ENCODE measurements at regions of chr1 and their contacts with region 1.

Region 1: DNA sequence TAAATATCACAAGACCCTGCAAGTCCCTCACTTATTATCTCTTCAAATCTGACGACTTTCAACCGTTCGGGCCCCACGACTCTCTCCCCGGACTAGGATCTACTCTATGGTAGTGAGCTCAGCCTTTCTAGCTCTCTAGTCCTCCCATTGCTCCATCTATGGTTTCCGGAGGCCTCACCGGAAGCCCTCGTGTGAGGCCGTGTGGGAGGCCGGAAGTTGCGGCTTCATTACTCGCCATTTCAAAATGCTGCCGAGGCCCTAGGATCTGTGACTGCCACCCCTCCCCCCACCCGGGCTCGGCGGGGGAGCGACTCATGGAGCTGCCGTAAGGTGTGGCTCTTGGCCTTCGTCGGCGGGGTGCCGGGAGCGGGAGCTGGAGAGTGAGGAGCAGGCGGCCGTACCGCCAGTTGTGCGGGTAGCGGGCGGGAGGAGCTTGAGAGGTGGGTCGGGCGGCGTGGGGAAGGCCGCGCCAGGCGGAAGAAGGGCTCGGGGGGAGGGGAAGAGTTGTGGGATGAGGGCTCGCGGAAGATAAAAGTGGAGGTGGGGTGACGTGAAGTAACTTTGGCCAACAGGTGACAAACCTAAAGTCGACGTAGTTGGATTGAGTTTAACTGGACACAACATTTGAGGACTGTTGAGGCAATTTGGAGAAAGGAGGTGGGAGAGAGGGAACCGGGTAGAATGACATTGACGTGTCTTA is at the start of gene MDM4:
- DNase-seq: peak; percentile 91
- ATAC-seq: peak; percentile 80
- H3K4me3 Mint-ChIP-seq: no peak within 1 kb of the TSS
- H3K27ac Mint-ChIP-seq: no peak within 1 kb of the TSS
- H3K4me1 Mint-ChIP-seq: peaks cover 80% of the 10 kb centered on the region
- H3K27me3 Mint-ChIP-seq: no peaks in the 10 kb centered on the region
- CTCF ChIP-seq: no peak
- total RNA-seq, gene MDM4: 221 and 264 TPM in 2 replicates

Region 2: DNA sequence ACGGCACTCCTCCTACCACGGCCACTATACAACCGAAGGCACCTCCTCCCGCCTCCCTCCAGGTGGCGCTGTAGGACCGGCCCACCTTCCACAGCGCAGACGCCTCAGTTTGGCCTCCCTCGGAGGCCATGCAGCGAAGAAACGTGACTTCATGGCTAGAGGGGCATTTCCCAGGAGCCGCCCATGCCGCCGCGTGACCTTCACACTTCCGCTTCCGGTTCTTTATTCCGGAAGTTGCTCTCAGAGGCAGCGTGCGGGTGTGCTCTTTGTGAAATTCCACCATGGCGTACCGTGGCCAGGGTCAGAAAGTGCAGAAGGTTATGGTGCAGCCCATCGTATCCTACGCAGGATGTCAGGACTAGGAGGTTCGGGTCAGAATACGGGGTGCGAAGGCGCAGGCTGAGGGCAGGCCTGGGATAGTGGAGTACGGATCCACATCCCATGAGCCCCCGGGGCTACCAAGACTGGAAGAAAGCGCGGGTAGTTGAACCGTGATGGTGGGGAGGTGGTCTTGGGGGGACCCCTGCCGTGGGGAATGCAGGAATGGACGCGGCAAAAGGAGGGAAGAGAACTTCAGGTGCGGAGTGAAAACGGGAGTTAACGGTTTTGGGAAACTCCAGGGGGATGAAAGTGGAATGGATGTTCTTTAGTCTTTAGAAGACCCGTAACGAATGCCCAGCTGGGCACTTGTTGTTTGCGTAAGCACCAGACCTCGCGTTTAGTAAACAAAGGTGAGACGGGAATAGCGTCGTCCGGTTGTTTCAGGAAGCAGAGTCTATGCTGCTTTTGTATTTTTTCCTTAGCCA is 654.7 kb before region 1 on chr1 and contains the start of gene SNRPE:
- CTCF ChIA-PET with region 1: no interaction called
- POLR2A ChIA-PET with region 1: no interaction called
- intact Hi-C with region 1: loop called (anchors 10 kb)
- DNase-seq: peak; percentile 92
- ATAC-seq: peak; percentile 98
- H3K4me3 Mint-ChIP-seq: peak within 1 kb of the TSS; percentile 97
- H3K27ac Mint-ChIP-seq: peak within 1 kb of the TSS; percentile 98
- H3K4me1 Mint-ChIP-seq: peaks cover 24% of the 10 kb centered on the region
- H3K27me3 Mint-ChIP-seq: no peaks in the 10 kb centered on the region
- CTCF ChIP-seq: no peak
- total RNA-seq, gene SNRPE: 149 and 156 TPM in 2 replicates

Region 3: DNA sequence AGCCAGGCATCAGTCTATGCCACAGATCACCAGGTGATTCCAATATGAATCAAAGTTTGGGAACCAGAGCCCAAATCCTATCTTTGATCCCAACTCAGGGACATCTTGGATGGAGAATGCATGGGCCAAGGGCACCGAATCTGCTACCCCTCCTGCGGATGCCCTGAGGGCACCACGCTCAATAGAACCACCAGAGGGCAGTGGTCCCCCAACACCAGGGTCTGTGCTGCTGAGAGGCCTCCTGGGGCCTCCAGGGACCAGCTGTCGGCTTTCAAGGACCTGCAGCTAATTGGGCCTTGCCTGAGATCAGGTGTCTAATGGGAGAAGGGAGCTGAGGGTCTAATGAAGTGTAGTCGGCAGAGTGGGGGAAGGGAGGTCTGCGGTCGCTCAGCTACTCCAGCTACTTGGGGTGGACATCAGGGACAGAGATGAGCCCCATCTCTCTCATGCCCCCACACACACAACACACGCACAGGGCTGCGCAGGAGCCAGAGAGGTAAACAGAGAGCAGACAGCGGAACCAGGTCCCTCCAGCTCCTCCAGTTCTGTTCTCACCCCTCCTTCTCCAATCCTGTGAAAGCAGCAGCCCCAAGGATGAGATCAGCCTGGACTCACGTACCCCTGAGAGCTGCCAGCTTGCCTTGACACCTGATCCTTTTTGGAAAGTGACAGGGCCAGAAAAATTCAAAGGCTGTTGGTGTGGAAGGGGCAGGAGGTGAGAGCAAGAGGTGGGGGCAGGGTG is 69.8 kb before region 1 on chr1:
- CTCF ChIA-PET with region 1: interaction called, 6 read pairs
- POLR2A ChIA-PET with region 1: interaction called, 51 read pairs
- intact Hi-C with region 1: no loop called
- DNase-seq: peak; percentile 70
- ATAC-seq: peak; percentile 90
- H3K4me3 Mint-ChIP-seq: peak overlapping the region; percentile 62
- H3K27ac Mint-ChIP-seq: peak overlapping the region; percentile 82
- H3K4me1 Mint-ChIP-seq: peaks cover 60% of the 10 kb centered on the region
- H3K27me3 Mint-ChIP-seq: no peaks in the 10 kb centered on the region
- CTCF ChIP-seq: no peak

Region 4: DNA sequence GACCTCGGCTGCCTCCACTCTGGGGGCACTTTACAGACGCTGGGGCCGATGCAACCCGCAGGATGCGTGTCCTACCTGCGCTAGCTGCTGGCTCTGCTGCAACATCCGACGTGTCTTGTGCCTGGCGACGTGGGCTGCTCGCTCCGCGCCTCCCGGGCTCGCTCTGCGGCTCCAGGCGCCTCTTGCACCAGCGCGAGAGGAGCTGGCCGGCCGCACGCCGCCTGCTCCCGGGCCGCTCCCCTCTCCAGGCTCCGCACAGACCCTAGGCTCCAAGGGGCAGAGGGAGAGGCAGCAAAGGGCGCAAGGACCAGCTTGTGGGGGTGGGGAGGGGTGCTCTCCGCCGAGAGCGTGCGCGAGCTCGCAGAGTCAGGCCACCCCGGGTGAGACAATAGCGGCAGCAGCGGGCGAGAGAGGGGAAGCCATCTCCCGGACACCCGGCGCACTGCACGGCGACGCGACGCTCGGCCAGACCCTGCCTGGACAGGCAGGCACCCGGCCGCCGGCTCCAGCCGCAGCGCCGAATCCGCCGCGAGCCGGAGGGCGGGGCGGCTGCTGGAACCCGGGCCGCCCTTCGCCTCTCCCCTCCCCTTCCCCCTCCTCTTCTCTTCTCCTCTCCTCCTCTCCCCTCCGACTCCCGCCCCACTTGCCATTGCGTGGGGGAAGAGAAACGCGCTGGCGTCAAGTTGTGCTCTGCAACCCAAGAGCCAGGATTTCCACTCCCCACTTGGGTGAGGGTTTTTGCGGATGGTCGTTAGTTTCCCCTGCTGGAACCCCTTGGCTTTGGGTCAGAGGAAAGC is 21.9 kb before region 1 on chr1 and contains the start of gene PIK3C2B:
- CTCF ChIA-PET with region 1: interaction called, 3 read pairs
- POLR2A ChIA-PET with region 1: interaction called, 58 read pairs
- intact Hi-C with region 1: no loop called
- DNase-seq: peak; percentile 71
- ATAC-seq: peak; percentile 75
- H3K4me3 Mint-ChIP-seq: peak within 1 kb of the TSS; percentile 97
- H3K27ac Mint-ChIP-seq: peak within 1 kb of the TSS; percentile 97
- H3K4me1 Mint-ChIP-seq: peaks cover 80% of the 10 kb centered on the region
- H3K27me3 Mint-ChIP-seq: no peaks in the 10 kb centered on the region
- CTCF ChIP-seq: no peak
- total RNA-seq, gene PIK3C2B: 127 and 151 TPM in 2 replicates

Region 5: DNA sequence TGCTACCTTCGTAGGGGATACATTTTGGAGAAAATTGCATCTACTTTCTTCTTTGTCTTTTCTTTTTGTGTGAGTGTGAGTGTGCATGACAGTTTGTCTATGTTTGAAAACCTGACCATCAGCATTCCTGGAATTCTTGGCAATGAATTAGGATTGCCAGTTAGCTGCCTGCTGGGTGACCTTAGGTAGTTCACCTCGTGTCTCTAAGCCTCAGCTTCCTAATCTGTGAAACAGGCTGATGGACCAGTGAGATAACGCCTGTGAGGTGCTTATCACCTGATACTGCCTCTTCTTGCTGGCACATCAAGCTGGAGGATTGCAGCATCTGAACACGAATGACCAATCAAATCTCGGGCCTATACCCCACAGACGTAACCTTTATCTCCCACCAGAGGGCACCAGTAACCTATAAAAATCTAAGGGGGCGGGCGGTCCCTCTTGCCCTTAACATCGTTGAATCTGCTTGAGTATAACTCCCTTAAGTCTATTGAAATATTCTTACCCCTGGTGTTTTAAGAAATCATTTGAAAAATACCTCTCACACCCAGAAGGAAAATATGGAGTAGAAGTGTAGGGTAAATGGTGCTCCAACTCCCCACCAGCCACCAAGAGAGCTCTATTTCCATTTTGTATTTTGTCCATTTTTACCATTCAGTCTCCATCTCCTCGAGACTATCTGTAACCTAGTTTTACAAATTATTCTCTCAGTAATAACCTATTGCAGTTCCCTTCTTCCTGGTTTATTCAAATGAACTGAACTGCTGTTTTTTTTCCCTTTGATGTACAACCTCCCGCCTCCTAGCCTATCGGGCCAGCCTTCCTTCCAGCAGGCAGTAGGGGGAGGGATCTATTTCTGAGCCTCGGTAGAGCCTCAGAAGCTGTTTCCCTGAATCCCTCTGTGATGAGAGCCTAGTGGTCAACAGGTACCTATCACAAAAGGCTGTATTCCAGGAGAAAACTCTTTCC is 49.6 kb after region 1 on chr1:
- CTCF ChIA-PET with region 1: interaction called, 5 read pairs
- POLR2A ChIA-PET with region 1: interaction called, 3 read pairs
- intact Hi-C with region 1: loop called (anchors 2 kb)
- DNase-seq: peak; percentile 31
- ATAC-seq: peak; percentile 80
- H3K4me3 Mint-ChIP-seq: peak overlapping the region; percentile 22
- H3K27ac Mint-ChIP-seq: peak overlapping the region; percentile 68
- H3K4me1 Mint-ChIP-seq: peaks cover 41% of the 10 kb centered on the region
- H3K27me3 Mint-ChIP-seq: no peaks in the 10 kb centered on the region
- CTCF ChIP-seq: peak; percentile 61

Region 6: GRCh38 chr1:205313563-205314308 is 797.4 kb after region 1 on chr1:
- CTCF ChIA-PET with region 1: no interaction called
- POLR2A ChIA-PET with region 1: no interaction called
- intact Hi-C with region 1: loop called (anchors 10 kb)
- DNase-seq: peak; percentile 55
- ATAC-seq: peak; percentile 82
- H3K4me3 Mint-ChIP-seq: peak overlapping the region; percentile 85
- H3K27ac Mint-ChIP-seq: peak overlapping the region; percentile 98
- H3K4me1 Mint-ChIP-seq: peaks cover 95% of the 10 kb centered on the region
- H3K27me3 Mint-ChIP-seq: no peaks in the 10 kb centered on the region
- CTCF ChIP-seq: no peak

Measured in activated B cell treated with CpG ODN at 0.5 μM for 24 hours (primary cell).